A549 (cell line): ENCODE measurements at regions of chr19 and their contacts with region 1.

Region 1: DNA sequence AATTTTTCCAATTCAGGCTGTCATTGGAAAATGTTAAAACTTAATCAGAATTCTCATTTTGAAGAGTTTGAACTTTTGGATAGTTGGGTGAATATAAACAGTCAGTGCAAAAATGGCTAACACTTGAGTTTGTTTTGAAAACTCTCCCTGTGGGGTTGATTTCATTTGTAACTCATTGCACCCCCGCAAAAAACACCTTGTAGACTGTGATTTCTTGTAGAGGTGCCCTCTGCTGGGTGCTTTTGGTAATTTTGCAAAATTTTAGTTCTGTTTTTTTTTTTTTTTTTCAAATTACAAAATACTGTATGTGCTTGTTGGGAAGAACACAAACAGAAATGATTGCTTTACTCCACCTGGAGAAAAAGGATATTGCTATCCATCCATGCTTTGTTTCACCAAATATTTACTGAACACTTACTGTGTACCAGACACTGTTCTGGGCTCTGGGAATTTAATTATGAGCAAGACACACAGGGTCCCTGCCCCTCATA is 28.2 kb upstream of the GPI start:
- DNase-seq: peak; percentile 46 to 51
- ATAC-seq: peak; percentile 45 to 67; a peak in 4 of 6 replicates
- H3K4me3 ChIP-seq: no peak overlapping the region
- H3K27ac ChIP-seq: no peak overlapping the region
- H3K4me1 ChIP-seq: peaks cover 5% of the 10 kb centered on the region; the same call in 2 of the 3 replicates
- CTCF ChIP-seq: peak; percentile 95
- EP300 ChIP-seq: no peak
- POLR2A ChIP-seq: no peak
- RAD21 ChIP-seq: peak; percentile 65 to 71

Region 2: GRCh38 chr19:34317311-34317927 is 19.4 kb before region 1 on chr19:
- CTCF ChIA-PET with region 1: interaction called, 32 read pairs
- POLR2A ChIA-PET with region 1: interaction called, 4 read pairs
- DNase-seq: no peak
- ATAC-seq: peak; percentile 38 to 49; a peak in 4 of 6 replicates
- H3K4me3 ChIP-seq: no peak overlapping the region
- H3K27ac ChIP-seq: no peak overlapping the region
- H3K4me1 ChIP-seq: peaks cover 25% of the 10 kb centered on the region
- CTCF ChIP-seq: no peak
- EP300 ChIP-seq: no peak
- POLR2A ChIP-seq: no peak
- RAD21 ChIP-seq: no peak

Region 3: DNA sequence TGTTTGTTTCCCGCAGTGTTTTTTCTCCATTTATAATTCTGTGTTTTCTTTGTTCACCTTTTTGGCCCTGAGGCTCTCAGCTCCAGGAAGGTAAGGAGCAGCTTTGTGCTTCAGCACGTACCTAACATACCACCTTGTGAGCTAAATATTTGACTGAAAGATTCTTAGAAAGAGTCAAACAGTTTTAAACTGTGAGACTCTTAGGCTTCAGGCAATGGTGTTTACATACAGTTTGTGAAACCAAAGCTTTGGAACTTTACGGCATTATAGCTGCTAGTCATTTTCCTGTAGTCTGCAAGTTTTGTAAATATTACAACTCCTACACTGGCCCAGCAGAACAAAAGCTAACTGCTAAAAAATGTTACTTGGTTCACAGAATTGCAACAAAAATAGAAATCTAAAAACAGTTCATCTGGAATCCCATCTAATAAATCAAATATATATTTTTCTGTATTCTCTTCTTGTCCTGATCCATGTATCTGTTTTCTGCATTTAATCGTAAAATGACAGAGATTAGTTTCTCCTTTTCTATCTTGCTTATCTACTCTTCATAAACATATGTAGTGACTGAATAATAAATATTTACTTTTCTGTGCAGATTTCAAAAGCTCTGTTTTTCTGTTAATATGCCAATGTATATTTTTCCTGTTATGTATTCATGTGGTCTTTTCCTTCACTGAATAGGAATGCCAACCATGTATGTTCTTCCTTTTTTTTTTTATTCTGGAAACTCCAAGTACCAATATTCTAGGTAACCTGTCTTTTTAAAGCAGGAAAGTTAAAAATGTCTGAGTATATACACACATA is 10.6 kb before region 1 on chr19:
- CTCF ChIA-PET with region 1: interaction called, 12 read pairs
- POLR2A ChIA-PET with region 1: no interaction called
- DNase-seq: no peak
- ATAC-seq: no peak
- H3K4me3 ChIP-seq: no peak overlapping the region
- H3K27ac ChIP-seq: no peak overlapping the region
- H3K4me1 ChIP-seq: no peaks in the 10 kb centered on the region
- CTCF ChIP-seq: no peak
- EP300 ChIP-seq: no peak
- POLR2A ChIP-seq: no peak
- RAD21 ChIP-seq: no peak